Calu3 (cell line): ENCODE measurements at regions of chr20 and their contacts with region 1.

Region 1: GRCh38 chr20:22453239-22454080 is 130.9 kb downstream of the FOXA2 start:
- DNase-seq: no peak
- H3K4me3 Mint-ChIP-seq: no peak overlapping the region
- H3K27ac Mint-ChIP-seq: no peak overlapping the region
- H3K4me1 Mint-ChIP-seq: no peaks in the 10 kb centered on the region
- H3K27me3 Mint-ChIP-seq: no peaks in the 10 kb centered on the region
- CTCF ChIP-seq: peak; percentile 26

Region 2: DNA sequence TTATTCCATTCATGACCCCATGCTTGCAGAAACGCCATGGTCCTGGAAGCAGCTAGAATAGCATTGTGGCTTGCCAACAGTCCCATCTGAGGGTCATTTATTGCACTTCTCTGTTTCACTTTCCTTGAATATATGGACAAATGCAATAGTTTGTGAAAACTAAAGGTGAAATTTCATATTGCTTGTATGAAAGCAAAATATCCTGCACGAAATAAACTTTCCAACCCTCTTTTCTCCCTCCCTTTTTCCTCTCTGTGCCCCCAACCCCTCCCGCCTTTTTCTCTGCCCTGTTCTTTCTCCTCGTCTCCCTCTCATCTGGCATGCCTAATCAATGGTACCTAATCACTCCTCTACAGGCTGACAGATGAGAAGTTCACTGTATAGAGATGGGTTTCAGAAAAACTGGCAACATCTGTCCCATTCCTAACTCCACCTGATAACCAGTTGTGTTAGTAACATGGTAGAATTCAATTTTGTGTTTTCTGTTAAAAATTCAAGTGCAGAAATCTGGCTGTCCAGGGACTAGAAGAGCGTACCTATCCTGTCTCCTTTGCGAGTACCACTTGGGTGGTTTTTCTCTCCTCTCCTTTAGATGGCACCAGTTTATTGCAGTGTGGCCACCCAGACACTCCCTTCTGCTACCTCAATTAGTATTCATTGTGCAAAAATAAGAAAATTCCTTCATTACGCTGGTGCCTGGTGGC is 67.7 kb before region 1 on chr20:
- CTCF ChIA-PET with region 1: no interaction called
- intact Hi-C with region 1: loop called (anchors 5 kb)
- DNase-seq: peak; percentile 8
- H3K4me3 Mint-ChIP-seq: no peak overlapping the region
- H3K27ac Mint-ChIP-seq: no peak overlapping the region
- H3K4me1 Mint-ChIP-seq: peaks cover 9% of the 10 kb centered on the region
- H3K27me3 Mint-ChIP-seq: no peaks in the 10 kb centered on the region
- CTCF ChIP-seq: no peak